RWPE1 (cell line): ENCODE measurements at regions of chr17 and their contacts with region 1.

Region 1: DNA sequence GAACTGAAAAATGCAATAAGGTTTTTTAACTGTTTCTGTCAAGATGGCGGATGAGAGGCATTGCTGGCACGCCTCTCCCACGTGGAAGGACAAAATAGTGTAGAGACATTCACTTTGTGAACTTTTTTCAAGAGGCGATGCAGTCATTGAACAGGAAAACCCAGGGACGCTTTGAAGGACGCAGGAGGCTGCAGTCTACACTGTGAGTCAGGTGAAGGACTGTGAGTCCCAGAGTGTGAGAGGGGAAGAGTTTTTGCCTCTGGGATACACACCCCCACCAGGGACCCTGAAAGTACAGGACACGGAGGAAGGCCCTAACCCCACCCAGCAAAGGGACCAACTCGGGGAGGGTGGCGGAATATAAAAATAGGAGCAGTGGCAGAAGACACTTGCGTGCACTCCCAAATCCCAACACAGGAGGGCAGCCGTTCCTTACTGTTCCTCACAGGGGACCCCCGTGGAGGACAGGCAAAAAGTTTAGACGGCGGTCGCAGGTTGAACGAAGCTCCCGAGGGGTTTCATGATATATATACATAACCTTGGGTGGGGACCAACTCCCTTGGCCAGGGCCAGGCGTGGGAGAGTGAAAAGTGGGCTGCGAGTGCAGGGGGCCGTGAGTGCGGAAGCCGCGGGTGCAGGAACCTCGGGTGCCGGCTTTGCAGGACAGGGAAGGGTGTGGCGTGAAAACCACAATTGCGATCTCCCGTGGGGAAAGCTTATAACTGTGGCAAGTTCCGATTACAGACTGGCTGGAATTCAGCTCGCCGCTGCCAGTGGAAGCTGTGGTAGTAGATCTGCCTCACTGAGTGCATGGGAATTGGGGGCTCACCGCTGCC is 82.0 kb upstream of the ALOX12 start:
- DNase-seq: peak; percentile 70
- H3K27ac ChIP-seq: no peak overlapping the region
- CTCF ChIP-seq: peak; percentile 83

Region 2: DNA sequence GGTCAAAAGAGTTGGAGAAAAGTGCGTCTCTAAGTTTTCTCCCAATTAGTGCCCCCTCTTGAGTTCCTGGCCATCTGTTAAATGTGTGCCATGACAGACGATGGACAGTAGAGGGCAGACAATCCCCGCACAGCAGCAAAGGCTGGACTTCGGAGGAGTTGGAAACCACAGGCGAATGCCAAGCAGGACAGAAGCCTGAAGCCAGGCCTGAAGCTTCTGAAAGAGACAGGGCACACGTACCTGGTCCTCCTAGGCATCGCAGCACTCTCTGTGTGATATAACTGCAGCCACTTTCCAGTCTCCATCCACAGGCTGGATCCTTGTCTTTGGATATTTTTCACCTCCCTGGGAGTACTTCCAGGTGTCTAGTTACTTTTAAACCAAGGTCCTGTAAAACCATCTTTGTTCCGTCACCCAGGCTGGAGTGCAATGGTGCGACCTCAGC is 247.7 kb before region 1 on chr17:
- CTCF ChIA-PET with region 1: interaction called, 10 read pairs
- POLR2A ChIA-PET with region 1: no interaction called
- DNase-seq: peak; percentile 74
- H3K27ac ChIP-seq: peak overlapping the region; percentile 91
- CTCF ChIP-seq: peak; percentile 93

Region 3: GRCh38 chr17:6843241-6843880 is 70.5 kb before region 1 on chr17:
- CTCF ChIA-PET with region 1: interaction called, 10 read pairs
- POLR2A ChIA-PET with region 1: no interaction called
- DNase-seq: peak; percentile 23
- H3K27ac ChIP-seq: no peak overlapping the region
- CTCF ChIP-seq: peak; percentile 66

Region 4: GRCh38 chr17:6857336-6857735 is 56.5 kb before region 1 on chr17:
- CTCF ChIA-PET with region 1: no interaction called
- POLR2A ChIA-PET with region 1: no interaction called
- DNase-seq: no peak
- H3K27ac ChIP-seq: no peak overlapping the region
- CTCF ChIP-seq: no peak

Region 5: GRCh38 chr17:6868579-6868978 is 45.2 kb before region 1 on chr17:
- CTCF ChIA-PET with region 1: interaction called, 10 read pairs
- POLR2A ChIA-PET with region 1: no interaction called
- DNase-seq: peak; percentile 78
- H3K27ac ChIP-seq: peak overlapping the region; percentile 49; the same call in 1 of the 2 replicates
- CTCF ChIP-seq: no peak

Region 6: DNA sequence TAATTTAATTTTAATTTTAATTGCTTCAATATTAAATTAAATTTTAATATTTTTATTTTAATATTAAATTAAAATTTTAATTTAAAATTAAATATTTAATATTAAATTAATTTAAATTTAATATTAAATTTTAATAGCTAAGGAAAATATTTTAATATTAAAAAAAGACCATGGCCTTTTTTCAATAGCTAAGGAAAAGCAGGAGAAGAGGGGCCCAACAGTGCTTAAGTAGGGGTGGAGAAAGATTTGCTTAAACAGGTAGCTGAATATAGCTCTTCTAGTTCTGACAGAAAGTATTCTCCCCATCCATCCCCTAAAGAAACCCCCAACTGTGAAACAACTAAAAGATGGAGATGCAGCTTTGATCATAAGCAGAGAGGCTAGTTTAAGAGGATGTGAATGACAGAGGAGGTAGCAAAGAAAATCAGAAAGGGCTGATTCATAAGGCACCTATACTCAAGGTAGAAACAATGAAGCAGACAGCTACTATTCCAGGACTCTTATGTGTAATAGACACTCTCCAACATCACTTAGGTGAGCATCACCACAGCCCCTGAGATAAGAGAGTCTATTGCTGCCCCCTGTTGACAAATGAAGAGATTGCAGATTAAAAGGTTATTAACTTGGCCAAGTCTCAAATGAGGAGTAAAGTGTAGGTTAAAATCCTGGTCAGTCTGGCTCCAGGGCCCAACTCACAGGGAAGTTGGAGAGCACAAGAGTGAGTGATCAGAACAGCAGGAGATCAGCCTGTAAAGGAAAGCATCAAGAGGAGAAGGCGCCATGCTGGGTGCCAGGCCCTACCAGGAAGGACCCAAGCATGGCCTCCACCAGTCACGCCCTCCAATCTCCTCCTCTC is 90.8 kb after region 1 on chr17:
- CTCF ChIA-PET with region 1: interaction called, 49 read pairs
- POLR2A ChIA-PET with region 1: no interaction called
- DNase-seq: no peak
- H3K27ac ChIP-seq: 0 out of 2 replicates have a peak overlapping the region, but pooled peaks have one; percentile 19
- CTCF ChIP-seq: peak; percentile 69

Region 7: GRCh38 chr17:7021993-7022778 is 108.4 kb after region 1 on chr17:
- CTCF ChIA-PET with region 1: interaction called, 16 read pairs
- POLR2A ChIA-PET with region 1: no interaction called
- DNase-seq: peak; percentile 59
- H3K27ac ChIP-seq: peak overlapping the region; percentile 48
- CTCF ChIP-seq: peak; percentile 94